H1 (cell line): ENCODE measurements at regions of chr16 and their contacts with region 1.

Region 1: DNA sequence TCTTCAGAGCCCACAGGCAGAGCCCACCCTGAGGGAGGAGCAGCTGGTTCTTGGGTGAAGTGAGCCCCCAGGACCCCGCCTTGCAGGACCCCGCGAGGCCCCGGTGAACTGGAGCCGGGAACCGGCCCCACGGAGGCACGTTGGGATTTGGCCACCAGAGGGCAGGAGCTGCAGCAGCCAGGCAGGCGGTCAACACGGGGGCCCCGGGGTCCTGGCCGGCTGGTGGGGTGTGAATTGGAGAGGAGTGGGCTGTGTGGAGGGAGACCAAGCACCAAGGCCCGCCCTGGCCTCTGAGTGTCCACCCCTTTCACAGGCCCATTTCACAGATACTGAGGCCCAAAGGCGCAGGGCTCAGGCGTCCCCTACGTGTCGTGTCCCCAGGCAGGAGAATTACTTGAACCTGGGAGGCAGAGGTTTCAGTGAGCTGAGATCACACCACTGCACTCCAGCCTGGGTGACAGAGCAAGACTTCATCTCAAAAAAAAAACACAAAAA is 2.2 kb downstream of the DPEP1 start:
- DNase-seq: peak in 1 of 2 experiments; percentile 92
- H3K4me3 ChIP-seq: no peak overlapping the region
- H3K27ac ChIP-seq: no peak overlapping the region
- H3K4me1 ChIP-seq: peaks cover 0 to 17% (median 5%) of the 10 kb centered on the region in 4 experiments; a peak in 5 of 7 replicates
- H3K27me3 ChIP-seq: no peaks in the 10 kb centered on the region; a peak in 2 of 7 replicates
- CTCF ChIP-seq: peak; percentile 72 to 90 (median 89)
- EP300 ChIP-seq: no peak
- POLR2A ChIP-seq: no peak
- RAD21 ChIP-seq: peak; percentile 55 to 75

Region 2: DNA sequence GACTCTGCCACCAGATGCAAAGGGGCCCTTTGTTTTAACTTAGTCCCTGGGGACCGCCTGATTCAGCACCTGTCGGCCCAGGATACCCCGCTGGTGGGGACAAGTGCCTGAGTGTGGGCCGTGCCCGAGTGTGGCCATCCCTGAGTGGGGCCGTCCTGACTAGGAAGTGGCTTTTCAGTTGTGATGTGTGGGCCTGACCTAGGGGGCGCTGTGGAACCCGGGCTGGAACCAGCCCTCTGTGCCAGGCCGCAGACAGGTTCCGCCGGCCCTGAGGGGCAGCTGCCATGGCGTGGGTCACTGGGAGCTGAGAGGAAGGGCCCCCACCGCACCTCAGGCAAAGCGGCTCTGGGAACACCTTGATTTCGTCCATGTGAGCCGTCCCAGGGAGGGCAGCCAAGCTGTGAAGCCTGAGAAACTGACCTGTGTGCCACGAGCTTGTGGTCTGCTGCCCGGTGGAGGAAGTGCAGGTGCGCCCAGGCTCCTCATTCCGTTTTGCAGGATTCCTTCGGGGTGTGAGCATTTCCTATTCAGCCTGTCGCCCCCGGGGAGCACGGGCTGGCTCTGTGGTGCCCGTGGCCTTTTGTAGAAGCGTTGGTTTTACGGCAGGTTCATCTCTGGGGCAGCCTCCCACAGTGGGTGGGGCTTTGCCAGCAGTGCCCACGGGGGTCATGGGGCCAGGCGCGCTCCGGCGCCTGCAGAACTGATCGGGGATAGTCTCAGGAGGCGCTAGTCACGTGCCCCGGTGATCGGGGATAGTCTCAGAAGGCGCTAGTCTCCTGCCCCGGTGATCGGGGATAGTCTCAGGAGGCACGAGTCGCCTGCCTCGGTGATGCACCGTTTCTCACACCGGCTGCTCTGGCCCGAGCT is 49.9 kb before region 1 on chr16:
- CTCF ChIA-PET with region 1: no interaction called
- POLR2A ChIA-PET with region 1: interaction called, 21 read pairs
- DNase-seq: peak in 1 of 2 experiments; percentile 94
- H3K4me3 ChIP-seq: peak overlapping the region; percentile 18 to 69 (median 47); a peak in 7 of 8 replicates
- H3K27ac ChIP-seq: peak overlapping the region; percentile 32; the same call in 1 of the 2 replicates
- H3K4me1 ChIP-seq: peaks cover 5 to 31% (median 9%) of the 10 kb centered on the region in 4 experiments
- H3K27me3 ChIP-seq: no peaks in the 10 kb centered on the region
- CTCF ChIP-seq: peak; percentile 65 to 79 (median 76)
- EP300 ChIP-seq: no peak
- POLR2A ChIP-seq: peak in 1 of 2 experiments; percentile 47; a peak in 2 of 3 replicates
- RAD21 ChIP-seq: peak in 1 of 2 experiments; percentile 34; a peak in 1 of 4 replicates

Region 3: GRCh38 chr16:89602273-89602951 is 13.2 kb before region 1 on chr16:
- CTCF ChIA-PET with region 1: interaction called, 56 read pairs
- POLR2A ChIA-PET with region 1: interaction called, 6 read pairs
- DNase-seq: peak in 1 of 2 experiments; percentile 74
- H3K4me3 ChIP-seq: peak overlapping the region in 1 of 4 experiments; percentile 15; a peak in 2 of 8 replicates
- H3K27ac ChIP-seq: no peak overlapping the region
- H3K4me1 ChIP-seq: peaks cover 0 to 11% (median 9%) of the 10 kb centered on the region in 4 experiments; a peak in 5 of 7 replicates
- H3K27me3 ChIP-seq: no peaks in the 10 kb centered on the region; a peak in 1 of 7 replicates
- CTCF ChIP-seq: no peak
- EP300 ChIP-seq: no peak
- POLR2A ChIP-seq: peak in 1 of 2 experiments; percentile 43; a peak in 1 of 3 replicates
- RAD21 ChIP-seq: no peak

Region 4: GRCh38 chr16:89633064-89633631 is 17.5 kb after region 1 on chr16:
- CTCF ChIA-PET with region 1: interaction called, 46 read pairs
- POLR2A ChIA-PET with region 1: interaction called, 3 read pairs
- DNase-seq: no peak
- H3K4me3 ChIP-seq: no peak overlapping the region
- H3K27ac ChIP-seq: no peak overlapping the region
- H3K4me1 ChIP-seq: peaks cover 0 to 7% (median 0%) of the 10 kb centered on the region in 4 experiments; a peak in 1 of 7 replicates
- H3K27me3 ChIP-seq: no peaks in the 10 kb centered on the region; a peak in 3 of 7 replicates
- CTCF ChIP-seq: no peak
- EP300 ChIP-seq: no peak
- POLR2A ChIP-seq: no peak
- RAD21 ChIP-seq: no peak

Region 5: DNA sequence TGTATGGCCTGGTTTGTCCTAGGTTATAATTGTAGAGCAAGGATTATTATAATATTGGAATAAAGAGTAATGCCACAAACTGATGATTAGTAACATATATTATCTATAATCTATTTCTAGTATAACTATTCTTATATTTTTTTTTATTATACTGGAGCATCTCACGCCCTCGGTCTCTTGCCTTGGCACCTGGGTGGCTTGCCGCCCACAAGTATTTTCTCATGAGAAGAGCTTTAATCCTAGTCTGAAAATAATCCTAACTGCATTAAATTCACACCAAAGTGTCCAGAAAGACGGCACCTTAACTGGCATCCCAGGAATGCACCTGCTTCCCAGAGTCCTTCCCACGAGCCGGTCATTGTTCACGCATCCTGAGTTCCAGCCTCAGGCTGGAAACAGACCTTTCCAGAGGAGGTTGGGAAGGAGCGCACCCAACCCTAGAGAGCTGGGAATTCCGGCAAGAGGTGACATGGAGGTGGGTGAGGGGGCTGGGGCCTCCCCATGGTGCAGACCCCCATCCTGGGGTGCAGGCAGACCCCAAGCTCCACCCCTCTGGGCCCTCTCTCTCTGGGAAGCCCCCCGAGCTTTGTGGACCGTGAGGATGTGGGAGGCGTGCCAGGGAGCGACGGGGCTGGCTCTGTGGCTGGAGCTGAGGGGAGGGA is 25.9 kb after region 1 on chr16:
- CTCF ChIA-PET with region 1: interaction called, 56 read pairs
- POLR2A ChIA-PET with region 1: interaction called, 10 read pairs
- DNase-seq: no peak
- H3K4me3 ChIP-seq: no peak overlapping the region
- H3K27ac ChIP-seq: no peak overlapping the region
- H3K4me1 ChIP-seq: no peaks in the 10 kb centered on the region
- H3K27me3 ChIP-seq: no peaks in the 10 kb centered on the region
- CTCF ChIP-seq: no peak
- EP300 ChIP-seq: no peak
- POLR2A ChIP-seq: no peak
- RAD21 ChIP-seq: no peak

Region 6: DNA sequence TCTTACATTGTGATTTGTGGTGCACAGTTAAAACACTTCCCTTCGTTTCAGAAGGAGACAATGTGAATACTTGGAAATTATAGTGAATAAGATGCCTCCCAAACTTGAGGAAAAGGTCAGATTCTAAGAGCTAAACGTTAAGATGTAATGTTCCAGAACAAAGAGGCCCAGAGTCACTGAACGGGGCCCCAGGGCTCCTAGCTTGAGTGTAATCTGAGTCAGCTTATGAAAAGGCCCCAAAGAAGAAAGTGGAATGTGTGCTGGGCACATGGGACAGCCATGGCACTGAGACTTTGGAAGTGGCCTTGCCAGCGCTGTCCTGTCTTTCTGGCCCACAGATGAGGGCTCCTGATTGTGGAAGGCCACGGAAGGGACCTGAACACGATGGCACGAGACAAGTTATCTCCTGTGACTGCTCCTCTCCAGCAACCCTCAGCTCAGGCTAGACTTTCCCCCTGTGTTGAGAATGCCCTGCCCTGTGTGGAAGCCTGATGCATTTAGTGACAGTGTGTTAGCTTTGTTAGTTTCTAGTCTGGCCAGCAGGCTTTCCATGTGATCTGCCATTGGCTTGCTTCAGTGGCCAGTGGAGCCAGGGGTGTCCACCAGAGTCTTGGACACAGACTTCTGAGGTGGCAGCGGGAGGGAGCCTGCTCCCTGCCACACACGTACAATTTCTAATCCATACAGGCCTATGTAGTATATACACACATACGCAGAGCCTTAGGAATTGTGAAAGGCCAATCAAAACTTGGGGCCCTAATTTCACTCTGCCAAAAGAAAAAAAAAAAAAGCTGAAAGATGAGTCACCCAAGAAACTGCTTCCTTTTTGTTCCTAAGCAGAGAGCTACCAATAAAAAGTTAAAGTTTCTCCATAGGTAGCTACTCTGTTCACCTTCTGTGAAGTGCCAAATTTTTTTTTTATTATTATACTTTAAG is 55.1 kb after region 1 on chr16:
- CTCF ChIA-PET with region 1: interaction called, 20 read pairs
- POLR2A ChIA-PET with region 1: no interaction called
- DNase-seq: no peak
- H3K4me3 ChIP-seq: no peak overlapping the region
- H3K27ac ChIP-seq: no peak overlapping the region
- H3K4me1 ChIP-seq: no peaks in the 10 kb centered on the region
- H3K27me3 ChIP-seq: no peaks in the 10 kb centered on the region
- CTCF ChIP-seq: no peak
- EP300 ChIP-seq: no peak
- POLR2A ChIP-seq: no peak
- RAD21 ChIP-seq: no peak